ENCODE measurements at regions of chr12 and their contacts with region 1.

Region 1: GRCh38 chr12:53746592-53747092 is 5.1 kb downstream of the CISTR start:
- DNase-seq: peak; percentile 96
- H3K4me3 Mint-ChIP-seq: peak overlapping the region; percentile 9
- H3K27ac Mint-ChIP-seq: no peak overlapping the region
- H3K4me1 Mint-ChIP-seq: peaks cover 17% of the 10 kb centered on the region
- H3K27me3 Mint-ChIP-seq: peaks cover 36% of the 10 kb centered on the region

Region 2: DNA sequence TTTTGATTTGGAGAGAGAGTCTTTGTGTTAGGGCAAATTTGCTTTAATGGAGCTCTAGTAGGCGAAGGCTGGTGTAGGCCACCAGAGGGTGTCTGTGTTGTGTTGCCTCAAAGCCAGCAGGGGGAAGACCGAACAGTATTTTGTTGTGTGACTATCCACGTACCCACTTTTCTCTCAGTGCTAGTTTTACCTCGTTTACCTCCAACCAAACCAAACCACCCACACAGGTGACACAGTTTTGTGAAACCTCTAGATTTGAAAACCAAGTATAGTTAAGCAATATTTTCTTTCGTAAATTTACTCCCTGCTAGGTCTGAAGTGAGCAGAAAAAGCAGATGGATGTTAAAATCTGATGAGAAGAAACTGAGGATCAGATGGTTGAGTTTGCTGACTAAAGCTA is 203.1 kb before region 1 on chr12:
- intact Hi-C with region 1: loop called (anchors 5 kb)
- DNase-seq: peak; percentile 85
- H3K4me3 Mint-ChIP-seq: no peak overlapping the region
- H3K27ac Mint-ChIP-seq: peak overlapping the region; percentile 72
- H3K4me1 Mint-ChIP-seq: peaks cover 9% of the 10 kb centered on the region
- H3K27me3 Mint-ChIP-seq: no peaks in the 10 kb centered on the region

Region 3: DNA sequence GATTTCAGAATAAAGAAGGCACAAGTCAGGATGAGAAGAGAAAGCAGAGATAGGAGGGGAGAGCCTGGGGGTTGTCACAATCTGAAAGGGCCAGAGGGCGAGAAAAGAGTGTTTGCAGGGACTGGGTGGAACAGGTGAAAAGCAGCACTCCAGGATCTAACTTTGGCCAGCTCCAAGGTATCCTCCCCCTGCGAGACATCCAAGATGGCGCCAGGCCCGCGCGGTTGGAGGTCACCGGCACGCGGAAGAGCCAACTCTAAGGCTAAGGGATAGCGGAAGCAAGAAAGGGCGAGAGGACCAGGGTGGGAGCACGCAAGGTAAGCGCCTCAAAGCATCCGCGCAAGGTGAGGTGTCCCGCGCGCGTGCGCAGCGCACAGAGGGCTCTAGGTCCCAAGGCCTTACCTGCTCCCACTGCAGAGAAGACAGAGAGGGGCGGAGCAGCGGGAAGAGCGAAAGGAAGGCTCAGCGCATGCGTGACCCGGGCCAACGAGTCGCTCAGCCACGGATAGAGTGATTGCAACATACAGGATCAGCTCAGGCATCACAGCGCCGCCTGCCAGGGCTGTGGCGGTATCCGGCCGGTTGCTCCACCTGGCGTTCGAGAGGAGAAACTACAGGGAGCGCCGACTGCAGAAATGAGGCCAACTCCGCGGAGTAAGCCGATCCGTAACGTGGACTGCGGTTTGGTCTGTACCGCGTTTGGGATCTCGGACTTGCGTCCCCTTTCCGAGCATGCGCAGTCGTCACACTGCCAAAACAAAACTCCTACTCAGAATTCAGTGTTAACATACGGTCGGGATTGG is 70.8 kb before region 1 on chr12 and contains the start of gene ATP5MC2:
- intact Hi-C with region 1: loop called (anchors 2 kb)
- DNase-seq: peak; percentile 99
- H3K4me3 Mint-ChIP-seq: peak within 1 kb of the TSS; percentile 100
- H3K27ac Mint-ChIP-seq: peak within 1 kb of the TSS; percentile 99
- H3K4me1 Mint-ChIP-seq: peaks cover 24% of the 10 kb centered on the region
- H3K27me3 Mint-ChIP-seq: peaks cover 32% of the 10 kb centered on the region
- total RNA-seq, gene ATP5MC2: 408 and 411 TPM in 2 replicates

Region 4: GRCh38 chr12:53686436-53686835 is 60.2 kb before region 1 on chr12:
- intact Hi-C with region 1: no loop called
- DNase-seq: no peak
- H3K4me3 Mint-ChIP-seq: no peak overlapping the region
- H3K27ac Mint-ChIP-seq: no peak overlapping the region
- H3K4me1 Mint-ChIP-seq: no peaks in the 10 kb centered on the region
- H3K27me3 Mint-ChIP-seq: peaks cover 38% of the 10 kb centered on the region

Region 5: GRCh38 chr12:53701518-53702260 is 45.0 kb before region 1 on chr12:
- intact Hi-C with region 1: loop called (anchors 1 kb)
- DNase-seq: peak; percentile 92
- H3K4me3 Mint-ChIP-seq: no peak overlapping the region
- H3K27ac Mint-ChIP-seq: no peak overlapping the region
- H3K4me1 Mint-ChIP-seq: peaks cover 5% of the 10 kb centered on the region
- H3K27me3 Mint-ChIP-seq: peaks cover 79% of the 10 kb centered on the region

Region 6: GRCh38 chr12:53727310-53728041 is 19.2 kb before region 1 on chr12 and contains the start of gene CALCOCO1:
- intact Hi-C with region 1: loop called (anchors 1 kb)
- DNase-seq: peak; percentile 99
- H3K4me3 Mint-ChIP-seq: peak within 1 kb of the TSS; percentile 95
- H3K27ac Mint-ChIP-seq: peak within 1 kb of the TSS; percentile 90
- H3K4me1 Mint-ChIP-seq: peaks cover 26% of the 10 kb centered on the region
- H3K27me3 Mint-ChIP-seq: peaks cover 2% of the 10 kb centered on the region
- total RNA-seq, gene CALCOCO1: 14.5 and 15.2 TPM in 2 replicates

Region 7: GRCh38 chr12:53757095-53757770 is 10.6 kb after region 1 on chr12:
- intact Hi-C with region 1: loop called (anchors 1 kb)
- DNase-seq: peak; percentile 95
- H3K4me3 Mint-ChIP-seq: peak overlapping the region; percentile 43
- H3K27ac Mint-ChIP-seq: peak overlapping the region; percentile 52
- H3K4me1 Mint-ChIP-seq: peaks cover 32% of the 10 kb centered on the region
- H3K27me3 Mint-ChIP-seq: peaks cover 37% of the 10 kb centered on the region

Measured in activated CD4-positive, alpha-beta T cell treated with anti-CD3 and anti-CD28 coated beads, Interleukin-2, amount 10 ng/mL, durations not matched to agents 24 days and 14 days (primary cell).